ENCODE measurements at regions of chr3 and their contacts with region 1.

Region 1: GRCh38 chr3:127612966-127613365 is 14.8 kb downstream of the MCM2 start:
- DNase-seq: no peak
- ATAC-seq: no peak
- H3K4me3 Mint-ChIP-seq: no peak overlapping the region
- H3K27ac Mint-ChIP-seq: no peak overlapping the region
- H3K4me1 Mint-ChIP-seq: peaks cover 10% of the 10 kb centered on the region
- H3K27me3 Mint-ChIP-seq: no peaks in the 10 kb centered on the region
- CTCF ChIP-seq: no peak

Region 2: GRCh38 chr3:127622772-127623576 is 10.0 kb after region 1 on chr3:
- CTCF ChIA-PET with region 1: no interaction called
- POLR2A ChIA-PET with region 1: interaction called, 50 read pairs
- intact Hi-C with region 1: no loop called
- DNase-seq: no peak
- ATAC-seq: no peak
- H3K4me3 Mint-ChIP-seq: no peak overlapping the region
- H3K27ac Mint-ChIP-seq: no peak overlapping the region
- H3K4me1 Mint-ChIP-seq: peaks cover 17% of the 10 kb centered on the region
- H3K27me3 Mint-ChIP-seq: peaks cover 9% of the 10 kb centered on the region
- CTCF ChIP-seq: no peak

Region 3: DNA sequence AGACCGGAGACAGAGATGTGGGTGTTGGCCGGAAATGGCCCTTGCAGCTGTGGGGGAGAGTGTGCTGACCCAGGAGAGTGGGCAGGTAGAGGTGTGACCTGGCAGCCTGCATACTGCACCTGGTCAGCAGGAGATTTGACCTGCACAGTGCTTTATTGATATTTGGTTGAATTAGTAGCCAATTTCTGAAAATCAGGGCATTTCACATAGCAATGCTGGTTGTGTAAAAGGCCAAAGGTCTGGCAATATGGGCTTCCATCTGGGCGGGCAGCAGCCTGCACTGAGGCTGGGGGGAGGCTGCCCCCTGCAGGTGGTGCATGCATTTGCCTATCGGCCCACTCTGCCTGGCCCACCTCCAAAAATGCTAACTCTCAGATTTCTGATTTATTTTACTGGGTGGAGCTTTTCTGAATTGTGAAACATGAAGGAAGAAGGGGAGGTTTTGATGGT is 218.8 kb after region 1 on chr3:
- CTCF ChIA-PET with region 1: no interaction called
- POLR2A ChIA-PET with region 1: no interaction called
- intact Hi-C with region 1: no loop called
- DNase-seq: peak; percentile 54
- ATAC-seq: peak; percentile 65
- H3K4me3 Mint-ChIP-seq: no peak overlapping the region
- H3K27ac Mint-ChIP-seq: no peak overlapping the region
- H3K4me1 Mint-ChIP-seq: peaks cover 4% of the 10 kb centered on the region
- H3K27me3 Mint-ChIP-seq: peaks cover 9% of the 10 kb centered on the region
- CTCF ChIP-seq: peak; percentile 65

Region 4: GRCh38 chr3:127857333-127857732 is 244.4 kb after region 1 on chr3:
- CTCF ChIA-PET with region 1: no interaction called
- POLR2A ChIA-PET with region 1: no interaction called
- intact Hi-C with region 1: no loop called
- DNase-seq: no peak
- ATAC-seq: no peak
- H3K4me3 Mint-ChIP-seq: no peak overlapping the region
- H3K27ac Mint-ChIP-seq: no peak overlapping the region
- H3K4me1 Mint-ChIP-seq: peaks cover 3% of the 10 kb centered on the region
- H3K27me3 Mint-ChIP-seq: no peaks in the 10 kb centered on the region
- CTCF ChIP-seq: no peak